CD8-positive, alpha-beta T cell (primary cell): ENCODE measurements at regions of chr11 and their contacts with region 1.

Region 1: GRCh38 chr11:66466225-66467027 is at the start of gene PELI3:
- DNase-seq: peak; percentile 92 to 97 (median 95)
- ATAC-seq: peak; percentile 92
- H3K4me3 ChIP-seq: peak within 1 kb of the TSS; percentile 59 to 92
- H3K4me3 Mint-ChIP-seq: peak within 1 kb of the TSS; percentile 91
- H3K27ac ChIP-seq: peak within 1 kb of the TSS; percentile 56 to 74
- H3K27ac Mint-ChIP-seq: peak within 1 kb of the TSS; percentile 91
- H3K4me1 ChIP-seq: peaks cover 20% of the 10 kb centered on the region
- H3K4me1 Mint-ChIP-seq: peaks cover 22% of the 10 kb centered on the region
- H3K27me3 ChIP-seq: no peaks in the 10 kb centered on the region
- H3K27me3 Mint-ChIP-seq: no peaks in the 10 kb centered on the region
- CTCF ChIP-seq: no peak
- total RNA-seq, gene PELI3: 12.6 to 16.8 TPM

Region 2: DNA sequence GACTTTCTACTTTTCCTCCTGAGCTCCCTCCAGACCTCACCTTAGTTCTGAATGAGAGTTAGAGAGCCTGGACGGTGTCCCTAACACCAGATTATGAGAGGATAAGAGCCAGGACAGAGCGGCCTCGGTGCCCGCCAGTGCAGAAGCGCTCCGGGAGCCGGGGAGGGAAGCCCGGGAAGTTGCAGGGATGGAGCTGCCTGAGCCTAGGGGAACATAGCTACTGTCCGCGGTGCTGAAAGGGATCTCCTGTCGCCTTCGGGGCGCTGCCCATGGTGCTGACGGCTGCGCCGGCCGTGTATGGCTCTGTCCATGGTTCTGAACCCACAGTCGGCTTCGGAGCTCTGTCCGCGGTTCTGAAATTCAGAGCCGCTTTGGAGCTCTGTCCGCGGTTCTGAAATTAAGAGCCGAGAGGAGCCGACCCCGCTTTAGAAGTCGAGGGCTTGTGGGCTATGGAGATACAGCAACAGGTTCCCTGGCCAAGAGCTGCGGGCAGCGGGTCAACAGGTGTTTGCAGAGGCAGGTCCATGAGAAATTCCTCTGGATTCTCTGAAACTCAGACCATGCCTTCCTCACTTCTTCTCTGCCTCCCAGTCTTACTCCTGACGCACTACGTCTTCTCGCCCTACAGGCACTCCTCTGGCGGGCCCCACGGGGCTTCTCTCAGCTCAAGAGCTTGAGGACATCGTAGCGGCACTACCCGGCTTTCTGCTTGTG is 44.8 kb before region 1 on chr11:
- CTCF ChIA-PET with region 1: interaction called, 7 read pairs
- POLR2A ChIA-PET with region 1: interaction called, 5 read pairs
- intact Hi-C with region 1: loop called (anchors 5 kb)
- DNase-seq: peak; percentile 81 to 93 (median 89)
- ATAC-seq: peak; percentile 98
- H3K4me3 ChIP-seq: no peak overlapping the region
- H3K4me3 Mint-ChIP-seq: no peak overlapping the region
- H3K27ac ChIP-seq: no peak overlapping the region
- H3K27ac Mint-ChIP-seq: no peak overlapping the region
- H3K4me1 ChIP-seq: no peaks in the 10 kb centered on the region
- H3K4me1 Mint-ChIP-seq: peaks cover 8% of the 10 kb centered on the region
- H3K27me3 ChIP-seq: peaks cover 16% of the 10 kb centered on the region in 2 experiments
- H3K27me3 Mint-ChIP-seq: peaks cover 28% of the 10 kb centered on the region
- CTCF ChIP-seq: no peak

Region 3: DNA sequence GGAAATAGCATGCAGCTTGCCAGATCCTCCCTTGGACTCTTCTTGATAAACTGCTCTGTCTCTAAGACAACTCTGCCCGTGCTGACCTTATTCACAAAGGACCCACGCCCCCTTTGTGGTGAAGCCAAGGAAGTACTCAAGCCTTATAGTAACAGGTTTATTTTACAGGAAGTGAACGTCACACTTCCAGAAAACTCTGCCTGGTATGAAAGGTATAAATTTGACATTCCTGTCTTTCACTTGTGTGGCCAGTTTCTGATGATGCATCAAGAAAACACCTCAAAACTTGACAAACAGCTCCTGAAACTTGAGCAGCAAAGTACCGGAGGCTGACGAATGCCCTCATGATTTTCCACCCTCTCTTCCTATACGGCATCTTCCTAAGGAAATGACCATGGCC is 12.2 kb before region 1 on chr11:
- CTCF ChIA-PET with region 1: no interaction called
- POLR2A ChIA-PET with region 1: no interaction called
- intact Hi-C with region 1: no loop called
- DNase-seq: no peak
- ATAC-seq: no peak
- H3K4me3 ChIP-seq: no peak overlapping the region
- H3K4me3 Mint-ChIP-seq: no peak overlapping the region
- H3K27ac ChIP-seq: no peak overlapping the region
- H3K27ac Mint-ChIP-seq: no peak overlapping the region
- H3K4me1 ChIP-seq: peaks cover 9% of the 10 kb centered on the region
- H3K4me1 Mint-ChIP-seq: peaks cover 13% of the 10 kb centered on the region
- H3K27me3 ChIP-seq: no peaks in the 10 kb centered on the region
- H3K27me3 Mint-ChIP-seq: peaks cover 15% of the 10 kb centered on the region
- CTCF ChIP-seq: no peak

Region 4: DNA sequence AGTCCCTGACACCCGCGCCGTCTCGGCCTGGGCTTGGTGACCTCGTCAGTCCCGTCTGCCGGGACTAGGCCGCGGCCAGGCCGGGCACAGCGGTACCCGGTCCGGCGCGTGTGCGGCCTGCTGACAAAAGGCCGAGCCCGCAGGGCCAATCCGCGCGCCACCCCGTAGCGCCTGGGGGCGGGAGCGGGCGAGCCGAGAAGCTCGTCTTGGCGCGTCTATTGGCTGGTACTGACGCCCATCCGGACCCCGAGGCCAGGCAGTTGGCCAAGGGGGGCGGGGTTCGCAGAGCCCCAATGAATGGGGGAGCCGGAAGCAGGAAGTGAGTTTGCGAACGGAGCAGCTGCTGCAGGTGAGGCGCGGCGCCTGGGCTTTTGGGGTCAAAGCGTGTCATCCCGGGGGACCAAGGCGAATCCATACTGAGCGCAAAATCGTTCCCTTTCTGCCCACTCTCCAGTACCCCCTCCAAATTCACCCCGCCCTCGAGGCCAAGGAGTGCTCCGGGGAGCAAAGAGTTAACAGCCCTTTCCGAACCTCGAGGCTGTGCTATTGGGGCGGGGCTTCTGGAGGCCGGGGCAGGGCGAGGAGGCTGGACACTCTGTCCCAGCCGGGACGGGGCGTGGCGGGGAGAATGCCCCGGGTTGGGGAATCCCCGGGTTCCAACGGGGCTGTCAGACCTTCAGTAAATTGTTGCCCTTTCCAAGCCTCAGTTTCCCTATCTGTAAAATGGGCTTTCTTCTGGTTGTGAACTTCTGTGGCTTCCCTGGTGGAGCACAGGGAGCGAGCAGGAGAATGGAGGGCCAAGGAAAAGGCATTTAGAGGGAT is 13.9 kb after region 1 on chr11 and contains the start of gene DPP3:
- CTCF ChIA-PET with region 1: interaction called, 9 read pairs
- POLR2A ChIA-PET with region 1: interaction called, 22 read pairs
- intact Hi-C with region 1: loop called (anchors 1 kb)
- DNase-seq: peak; percentile 91 to 97 (median 95)
- ATAC-seq: peak; percentile 98
- H3K4me3 ChIP-seq: peak within 1 kb of the TSS; percentile 90 to 93
- H3K4me3 Mint-ChIP-seq: peak within 1 kb of the TSS; percentile 89
- H3K27ac ChIP-seq: peak within 1 kb of the TSS; percentile 70 to 90
- H3K27ac Mint-ChIP-seq: peak within 1 kb of the TSS; percentile 89
- H3K4me1 ChIP-seq: peaks cover 17% of the 10 kb centered on the region
- H3K4me1 Mint-ChIP-seq: peaks cover 31% of the 10 kb centered on the region
- H3K27me3 ChIP-seq: no peaks in the 10 kb centered on the region
- H3K27me3 Mint-ChIP-seq: no peaks in the 10 kb centered on the region
- CTCF ChIP-seq: no peak
- total RNA-seq, gene DPP3: 13.7 to 15.6 TPM

Region 5: DNA sequence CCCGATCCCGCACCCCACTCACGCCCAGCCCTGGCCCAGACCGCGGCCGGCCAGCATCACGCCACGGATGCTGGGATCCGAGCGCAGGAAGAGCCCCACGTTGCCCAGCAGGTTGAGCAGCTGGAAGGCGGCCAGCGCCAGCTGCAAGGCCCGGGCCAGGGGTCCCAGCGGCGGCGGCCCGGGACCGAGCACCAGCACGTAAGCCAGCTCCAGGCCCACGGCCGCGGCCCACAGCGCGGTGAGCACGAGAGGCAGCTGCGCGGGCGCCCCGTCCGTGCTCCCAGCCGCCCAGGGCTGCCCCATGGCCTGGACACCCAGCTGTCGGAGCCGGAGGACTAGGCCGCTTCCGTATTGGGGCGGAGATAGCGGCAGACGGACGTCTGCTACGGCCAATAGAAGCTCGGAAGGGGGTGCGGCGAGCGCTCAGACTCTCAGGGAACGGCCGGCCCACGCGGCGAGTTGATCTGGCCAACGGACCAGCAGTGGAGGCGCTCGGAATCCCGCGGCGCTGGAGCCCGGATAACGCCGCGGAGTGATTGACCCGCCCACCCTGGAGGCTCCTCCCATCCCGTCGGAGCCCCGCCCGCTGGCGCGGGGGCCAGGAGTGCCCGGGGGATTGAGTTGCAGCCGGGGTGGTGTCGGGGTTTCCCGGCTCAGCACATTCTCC is 79.4 kb after region 1 on chr11 and contains the start of gene ZDHHC24:
- CTCF ChIA-PET with region 1: no interaction called
- POLR2A ChIA-PET with region 1: no interaction called
- intact Hi-C with region 1: loop called in 1 of 2 experiments (anchors 1 kb)
- DNase-seq: peak; percentile 57 to 93 (median 78)
- ATAC-seq: peak; percentile 81
- H3K4me3 ChIP-seq: peak within 1 kb of the TSS; percentile 68 to 97
- H3K4me3 Mint-ChIP-seq: peak within 1 kb of the TSS; percentile 84
- H3K27ac ChIP-seq: peak within 1 kb of the TSS; percentile 79 to 83
- H3K27ac Mint-ChIP-seq: peak within 1 kb of the TSS; percentile 92
- H3K4me1 ChIP-seq: peaks cover 31% of the 10 kb centered on the region
- H3K4me1 Mint-ChIP-seq: peaks cover 40% of the 10 kb centered on the region
- H3K27me3 ChIP-seq: no peaks in the 10 kb centered on the region
- H3K27me3 Mint-ChIP-seq: no peaks in the 10 kb centered on the region
- CTCF ChIP-seq: no peak
- total RNA-seq, gene ZDHHC24: 15.0 to 15.9 TPM

Region 6: DNA sequence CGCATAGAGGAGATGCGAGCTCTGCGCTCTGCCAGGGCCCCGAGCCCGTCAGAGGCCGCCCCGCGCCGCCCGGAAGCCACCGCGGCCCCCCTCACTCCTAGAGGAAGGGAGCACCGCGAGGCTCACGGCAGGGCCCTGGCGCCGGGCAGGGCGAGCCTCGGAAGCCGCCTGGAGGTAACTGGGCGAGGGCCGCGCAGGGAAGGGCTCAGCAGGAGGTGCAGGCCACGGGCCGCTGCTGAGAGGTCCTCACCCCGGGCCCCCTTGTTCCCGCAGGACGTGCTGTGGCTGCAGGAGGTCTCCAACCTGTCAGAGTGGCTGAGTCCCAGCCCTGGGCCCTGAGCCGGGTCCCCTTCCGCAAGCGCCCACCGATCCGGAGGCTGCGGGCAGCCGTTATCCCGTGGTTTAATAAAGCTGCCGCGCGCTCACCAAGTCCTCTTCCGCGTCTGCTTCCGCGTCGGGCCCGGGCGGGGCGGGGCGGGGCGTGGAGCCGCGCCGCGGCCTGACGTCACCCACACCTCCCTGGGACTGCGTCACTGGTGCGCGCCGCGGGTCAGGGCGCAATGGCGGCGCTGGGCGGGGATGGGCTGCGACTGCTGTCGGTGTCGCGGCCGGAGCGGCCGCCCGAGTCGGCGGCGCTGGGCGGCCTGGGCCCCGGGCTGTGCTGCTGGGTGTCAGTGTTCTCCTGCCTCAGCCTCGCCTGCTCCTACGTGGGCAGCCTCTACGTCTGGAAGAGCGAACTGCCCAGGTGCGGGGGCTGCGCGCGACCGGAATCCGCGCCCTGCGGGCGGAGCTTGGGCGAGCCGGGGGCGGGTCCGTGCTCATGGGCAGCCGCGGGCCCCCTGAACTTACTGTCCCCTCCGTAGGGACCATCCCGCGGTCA is 376.7 kb after region 1 on chr11 and contains the start of gene RCE1:
- CTCF ChIA-PET with region 1: no interaction called
- POLR2A ChIA-PET with region 1: no interaction called
- intact Hi-C with region 1: loop called in 1 of 2 experiments (anchors 5 kb)
- DNase-seq: peak; percentile 85 to 96 (median 89)
- ATAC-seq: peak; percentile 88
- H3K4me3 ChIP-seq: peak within 1 kb of the TSS; percentile 68 to 91
- H3K4me3 Mint-ChIP-seq: peak within 1 kb of the TSS; percentile 86
- H3K27ac ChIP-seq: peak within 1 kb of the TSS; percentile 99 to 100
- H3K27ac Mint-ChIP-seq: peak within 1 kb of the TSS; percentile 93
- H3K4me1 ChIP-seq: peaks cover 47% of the 10 kb centered on the region
- H3K4me1 Mint-ChIP-seq: peaks cover 51% of the 10 kb centered on the region
- H3K27me3 ChIP-seq: no peaks in the 10 kb centered on the region
- H3K27me3 Mint-ChIP-seq: no peaks in the 10 kb centered on the region
- CTCF ChIP-seq: no peak
- total RNA-seq, gene RCE1: 68.9 to 72.2 TPM